T-cell (primary cell): ENCODE measurements at regions of chr22 and their contacts with region 1.

Region 1: DNA sequence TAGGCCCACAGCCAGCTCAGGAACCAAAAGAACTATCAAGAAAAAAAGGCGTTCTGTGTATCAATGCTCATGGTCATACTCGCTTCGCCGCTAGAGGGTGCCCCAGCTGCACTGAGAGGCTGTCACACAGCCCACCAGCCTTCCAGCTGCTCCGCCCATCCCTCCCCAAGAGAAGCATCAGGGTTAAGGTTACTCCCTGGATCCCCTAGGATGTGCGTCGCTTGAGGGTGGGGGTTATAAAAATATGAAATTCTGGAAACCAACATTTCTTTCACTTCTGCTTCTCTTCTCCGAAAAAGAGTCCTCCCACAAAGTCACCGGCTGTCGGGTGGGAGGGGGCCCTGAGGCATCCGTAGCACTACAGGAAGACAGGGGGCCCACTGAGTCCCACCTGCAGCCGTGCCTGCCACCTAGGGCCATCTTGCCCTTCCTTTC is 1.7 kb downstream of the CBX6 start:
- DNase-seq: peak; percentile 63 to 90 (median 81)
- ATAC-seq: peak; percentile 33 to 53 (median 37)
- H3K4me3 ChIP-seq: peak overlapping the region; percentile 10 to 52
- H3K4me3 Mint-ChIP-seq: peak overlapping the region; percentile 86 to 94 (median 91)
- H3K27ac ChIP-seq: peak overlapping the region; percentile 64
- H3K27ac Mint-ChIP-seq: peak overlapping the region; percentile 75 to 77
- H3K4me1 ChIP-seq: peaks cover 17 to 69% of the 10 kb centered on the region in 2 experiments
- H3K4me1 Mint-ChIP-seq: peaks cover 56 to 62% (median 57%) of the 10 kb centered on the region in 3 donors
- H3K27me3 ChIP-seq: no peaks in the 10 kb centered on the region
- H3K27me3 Mint-ChIP-seq: no peaks in the 10 kb centered on the region

Region 2: DNA sequence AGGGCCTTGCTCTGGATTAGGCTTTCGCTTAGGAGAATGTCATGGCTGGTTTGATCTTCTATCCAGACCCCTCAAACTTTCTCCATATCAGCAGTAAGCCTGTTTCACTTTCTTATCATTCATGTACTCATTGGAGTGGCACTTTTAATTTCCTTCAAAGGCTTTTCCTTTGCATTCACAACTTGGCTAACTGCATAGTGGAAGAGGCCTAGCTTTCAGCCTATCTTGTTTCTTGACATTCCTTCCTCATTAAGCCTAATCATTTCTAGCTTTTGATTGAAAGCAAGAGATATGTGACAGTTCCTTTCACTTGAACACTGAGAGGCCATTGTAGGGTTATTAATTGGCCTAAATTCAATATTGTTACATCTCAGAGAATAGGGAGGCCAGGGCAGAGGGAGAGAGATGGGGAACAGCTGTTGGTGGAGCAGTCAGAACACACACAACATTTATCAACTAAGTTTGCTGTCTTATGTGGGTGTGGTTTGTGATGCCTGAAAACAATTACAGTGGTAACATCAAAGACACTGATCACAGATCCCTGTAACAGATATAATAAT is 49.4 kb after region 1 on chr22:
- CTCF ChIA-PET with region 1: no interaction called
- POLR2A ChIA-PET with region 1: no interaction called
- DNase-seq: no peak
- ATAC-seq: no peak
- H3K4me3 ChIP-seq: no peak overlapping the region
- H3K4me3 Mint-ChIP-seq: no peak overlapping the region
- H3K27ac ChIP-seq: no peak overlapping the region
- H3K27ac Mint-ChIP-seq: no peak overlapping the region
- H3K4me1 ChIP-seq: no peaks in the 10 kb centered on the region
- H3K4me1 Mint-ChIP-seq: no peaks in the 10 kb centered on the region
- H3K27me3 ChIP-seq: peaks cover 2 to 25% of the 10 kb centered on the region in 2 experiments
- H3K27me3 Mint-ChIP-seq: peaks cover 19 to 26% of the 10 kb centered on the region in 2 donors

Region 3: DNA sequence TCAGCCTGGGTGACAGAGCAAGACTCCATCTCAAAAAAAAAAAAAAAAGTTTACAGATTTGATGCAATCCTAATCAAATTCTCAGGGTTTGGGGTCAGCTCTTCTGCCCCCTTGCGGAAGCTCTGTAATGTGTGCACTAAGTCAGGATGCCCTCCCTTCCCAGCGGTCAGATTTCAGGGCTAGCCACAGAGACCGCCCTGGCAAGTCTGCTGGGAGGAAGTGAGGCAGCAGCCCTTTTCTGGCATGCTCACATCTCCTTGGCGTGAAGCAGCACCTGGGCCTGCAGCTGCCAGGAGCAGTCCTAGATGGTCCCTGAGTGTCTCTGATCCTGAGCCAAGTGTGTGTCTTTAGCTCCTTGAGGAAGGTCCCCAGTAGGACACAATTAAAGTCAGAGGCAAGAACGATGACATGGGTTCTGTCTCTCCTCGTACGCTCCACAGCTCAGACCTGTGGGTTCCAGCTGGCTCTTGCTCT is 132.9 kb after region 1 on chr22:
- CTCF ChIA-PET with region 1: interaction called, 4 to 12 read pairs
- POLR2A ChIA-PET with region 1: no interaction called
- DNase-seq: peak; percentile 38 to 87 (median 63)
- ATAC-seq: peak; percentile 85 to 88 (median 88)
- H3K4me3 ChIP-seq: no peak overlapping the region
- H3K4me3 Mint-ChIP-seq: no peak overlapping the region
- H3K27ac ChIP-seq: no peak overlapping the region
- H3K27ac Mint-ChIP-seq: peak overlapping the region; percentile 40 to 48
- H3K4me1 ChIP-seq: peaks cover 0 to 17% of the 10 kb centered on the region in 2 experiments
- H3K4me1 Mint-ChIP-seq: peaks cover 8 to 15% (median 10%) of the 10 kb centered on the region in 3 donors
- H3K27me3 ChIP-seq: no peaks in the 10 kb centered on the region
- H3K27me3 Mint-ChIP-seq: no peaks in the 10 kb centered on the region